ENCODE measurements at regions of chr1 and their contacts with region 1.

Region 1: GRCh38 chr1:93552741-93553455 is 105.0 kb downstream of the FNBP1L start:
- DNase-seq: peak in 2 of 5 donors; percentile 51 to 58
- ATAC-seq: peak; percentile 38 to 64 (median 48)
- H3K4me3 ChIP-seq: no peak overlapping the region
- H3K27ac ChIP-seq: peak overlapping the region; percentile 38 to 72 (median 64)
- H3K4me1 ChIP-seq: peaks cover 15 to 45% (median 35%) of the 10 kb centered on the region in 12 donors
- H3K27me3 ChIP-seq: no peaks in the 10 kb centered on the region
- CTCF ChIP-seq: no peak
- POLR2A ChIP-seq: no peak

Region 2: GRCh38 chr1:93395195-93395594 is 157.7 kb before region 1 on chr1:
- intact Hi-C with region 1: no loop called
- DNase-seq: no peak
- ATAC-seq: no peak
- H3K4me3 ChIP-seq: no peak overlapping the region
- H3K27ac ChIP-seq: no peak overlapping the region
- H3K4me1 ChIP-seq: no peaks in the 10 kb centered on the region
- H3K27me3 ChIP-seq: no peaks in the 10 kb centered on the region
- CTCF ChIP-seq: no peak
- POLR2A ChIP-seq: no peak

Region 3: DNA sequence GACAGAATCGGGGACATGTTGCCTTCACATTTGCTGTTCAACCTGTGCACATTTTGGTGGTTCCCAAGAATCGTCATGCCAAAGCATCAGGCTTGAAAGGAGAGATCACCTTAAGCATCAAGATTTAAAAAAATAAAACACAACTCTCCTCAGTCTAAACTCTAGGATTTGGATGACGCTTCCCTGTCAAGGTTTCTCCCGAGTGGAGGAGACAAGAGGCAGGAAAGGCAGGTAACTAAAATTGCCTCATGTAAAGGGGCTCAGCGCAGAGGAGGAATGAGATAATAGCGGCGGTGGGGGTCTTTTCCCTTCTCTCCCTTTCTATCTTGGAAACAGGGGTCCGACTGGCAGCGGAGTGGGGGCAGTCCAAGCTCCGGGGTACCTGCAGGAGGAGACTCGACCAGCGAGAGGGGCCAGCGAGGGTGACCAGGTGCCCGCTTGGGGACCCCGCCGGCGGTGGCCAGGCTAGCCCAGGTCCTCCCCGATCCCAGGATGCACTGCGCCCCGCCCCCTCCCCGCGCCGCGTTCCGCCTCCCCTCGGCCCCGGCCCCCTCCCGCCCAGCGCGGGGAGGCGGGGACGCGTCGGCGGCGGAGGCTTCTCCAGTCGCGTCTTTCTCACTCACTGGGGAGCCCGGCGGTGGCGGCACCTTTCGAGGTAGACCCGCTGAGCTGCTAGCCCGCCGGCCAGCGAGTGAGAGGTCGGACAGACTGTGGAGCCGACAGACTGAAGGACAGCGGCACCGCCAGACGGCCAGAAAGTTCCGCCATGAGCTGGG is 105.2 kb before region 1 on chr1 and contains the start of gene FNBP1L:
- intact Hi-C with region 1: loop called in 7 of 10 experiments (anchors 5 to 10 kb)
- DNase-seq: peak; percentile 83 to 87 (median 85)
- ATAC-seq: peak; percentile 83 to 96 (median 96)
- H3K4me3 ChIP-seq: peak within 1 kb of the TSS; percentile 70 to 100 (median 95)
- H3K27ac ChIP-seq: peak within 1 kb of the TSS; percentile 54 to 95 (median 89)
- H3K4me1 ChIP-seq: peaks cover 0 to 30% (median 9%) of the 10 kb centered on the region in 12 donors
- H3K27me3 ChIP-seq: no peaks in the 10 kb centered on the region
- CTCF ChIP-seq: no peak
- POLR2A ChIP-seq: peak in 1 of 2 donors; percentile 65
- total RNA-seq, gene FNBP1L: 20.5 to 38.8 (median 25.5) TPM